ENCODE measurements at regions of chr13 and their contacts with region 1.

Region 1: DNA sequence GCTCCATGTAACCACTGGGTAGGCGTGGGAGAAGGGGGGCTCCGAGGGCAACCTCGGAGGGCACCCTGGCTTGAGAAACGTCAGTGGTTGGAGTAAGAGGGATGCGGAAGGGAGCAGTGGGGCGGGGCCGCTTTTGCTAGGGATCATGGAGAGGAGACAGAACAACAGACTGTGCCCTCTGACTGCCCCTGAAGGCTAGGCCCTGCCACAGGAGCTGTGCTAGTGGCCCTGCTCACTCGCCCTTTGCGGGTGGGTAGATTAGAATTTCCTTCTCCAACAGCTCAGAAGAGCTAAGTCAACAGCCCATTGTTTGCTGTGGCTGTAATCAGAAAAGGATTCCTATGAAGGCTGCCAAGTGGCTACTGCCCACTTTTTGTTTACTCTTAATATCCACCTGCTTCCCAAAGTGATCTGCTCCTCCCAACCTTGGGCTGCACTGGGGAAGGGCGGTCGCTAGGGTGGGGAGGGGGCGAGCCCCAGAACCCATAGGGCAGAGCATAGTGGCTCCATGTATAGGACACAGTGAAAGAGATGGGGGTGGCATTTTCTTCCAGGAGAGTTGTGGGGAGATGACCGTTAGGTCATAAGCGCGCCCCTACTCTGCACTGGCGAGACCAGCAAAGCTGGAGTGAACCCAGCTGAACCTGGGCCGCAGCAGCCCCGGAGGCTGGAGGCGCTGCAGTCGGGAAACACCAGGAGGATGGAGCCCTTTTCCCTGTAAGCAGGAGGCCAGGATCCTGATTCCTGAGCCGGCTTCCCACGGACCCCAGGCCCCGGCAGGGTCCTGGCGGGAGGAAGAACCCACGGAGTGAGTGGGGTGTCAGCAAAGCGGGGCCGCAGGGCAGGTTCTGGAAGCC is 1.9 kb upstream of the C1QTNF9 start:
- DNase-seq: no peak

Region 2: GRCh38 chr13:24270639-24271141 is 36.7 kb before region 1 on chr13:
- intact Hi-C with region 1: loop called (anchors 5 kb)
- DNase-seq: peak; percentile 93

Region 3: GRCh38 chr13:24407844-24408243 is 100.4 kb after region 1 on chr13:
- intact Hi-C with region 1: no loop called
- DNase-seq: no peak